ENCODE measurements at regions of chr9 and their contacts with region 1.

Region 1: GRCh38 chr9:122810306-122810946 is 10.5 kb downstream of the OR1K1 start:
- DNase-seq: peak; percentile 81
- ATAC-seq: peak; percentile 94
- H3K4me3 Mint-ChIP-seq: no peak overlapping the region
- H3K27ac Mint-ChIP-seq: no peak overlapping the region
- H3K4me1 Mint-ChIP-seq: no peaks in the 10 kb centered on the region
- H3K27me3 Mint-ChIP-seq: peaks cover 11% of the 10 kb centered on the region
- CTCF ChIP-seq: peak; percentile 75

Region 2: GRCh38 chr9:122464633-122465567 is 345.5 kb before region 1 on chr9:
- CTCF ChIA-PET with region 1: interaction called, 19 read pairs
- POLR2A ChIA-PET with region 1: no interaction called
- DNase-seq: peak; percentile 55
- ATAC-seq: peak; percentile 66
- H3K4me3 Mint-ChIP-seq: no peak overlapping the region
- H3K27ac Mint-ChIP-seq: no peak overlapping the region
- H3K4me1 Mint-ChIP-seq: peaks cover 2% of the 10 kb centered on the region; the same call in 1 of the 2 replicates
- H3K27me3 Mint-ChIP-seq: peaks cover 57% of the 10 kb centered on the region
- CTCF ChIP-seq: peak; percentile 53; the same call in 1 of the 2 replicates

Region 3: GRCh38 chr9:122498883-122499288 is 311.5 kb before region 1 on chr9:
- CTCF ChIA-PET with region 1: interaction called, 19 read pairs
- POLR2A ChIA-PET with region 1: no interaction called
- DNase-seq: peak; percentile 27
- ATAC-seq: peak; percentile 94
- H3K4me3 Mint-ChIP-seq: no peak overlapping the region
- H3K27ac Mint-ChIP-seq: no peak overlapping the region
- H3K4me1 Mint-ChIP-seq: 0 out of 2 replicates have a peak, but pooled peaks cover 2% of the 10 kb centered on the region
- H3K27me3 Mint-ChIP-seq: peaks cover 49% of the 10 kb centered on the region
- CTCF ChIP-seq: peak; percentile 60

Region 4: GRCh38 chr9:122822056-122822455 is 11.6 kb after region 1 on chr9:
- CTCF ChIA-PET with region 1: no interaction called
- POLR2A ChIA-PET with region 1: no interaction called
- DNase-seq: no peak
- ATAC-seq: no peak
- H3K4me3 Mint-ChIP-seq: no peak overlapping the region
- H3K27ac Mint-ChIP-seq: no peak overlapping the region
- H3K4me1 Mint-ChIP-seq: peaks cover 6% of the 10 kb centered on the region
- H3K27me3 Mint-ChIP-seq: no peaks in the 10 kb centered on the region
- CTCF ChIP-seq: no peak

Region 5: DNA sequence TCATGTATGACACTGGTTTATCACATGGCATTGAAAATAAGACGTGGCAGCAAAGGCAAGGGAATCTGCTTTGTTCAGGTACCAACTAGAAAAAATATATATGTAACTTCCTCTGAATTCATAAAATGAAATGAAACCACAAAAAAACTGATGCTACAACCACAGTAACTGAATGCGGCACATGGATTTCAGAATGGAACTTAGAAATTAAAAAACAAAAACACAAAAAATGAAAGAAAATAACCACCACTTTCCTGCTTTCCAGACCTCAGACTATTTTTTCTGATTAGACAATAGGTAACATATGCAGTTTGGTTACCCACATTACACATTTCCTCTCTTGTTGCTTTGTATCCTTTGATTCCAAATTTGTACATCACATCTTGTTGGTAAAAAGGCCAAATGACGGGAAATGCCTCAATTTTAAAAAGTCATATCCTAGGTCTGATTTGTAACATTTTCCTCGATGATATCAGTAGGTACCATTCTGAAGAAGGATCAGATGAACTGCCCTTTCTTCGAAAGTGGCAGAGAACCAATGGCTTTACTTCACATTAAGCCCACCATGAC is 36.0 kb after region 1 on chr9:
- CTCF ChIA-PET with region 1: no interaction called
- POLR2A ChIA-PET with region 1: no interaction called
- DNase-seq: no peak
- ATAC-seq: no peak
- H3K4me3 Mint-ChIP-seq: no peak overlapping the region
- H3K27ac Mint-ChIP-seq: no peak overlapping the region
- H3K4me1 Mint-ChIP-seq: no peaks in the 10 kb centered on the region
- H3K27me3 Mint-ChIP-seq: no peaks in the 10 kb centered on the region
- CTCF ChIP-seq: no peak

Region 6: GRCh38 chr9:123217148-123217585 is 406.7 kb after region 1 on chr9:
- CTCF ChIA-PET with region 1: no interaction called
- POLR2A ChIA-PET with region 1: no interaction called
- DNase-seq: no peak
- ATAC-seq: no peak
- H3K4me3 Mint-ChIP-seq: no peak overlapping the region
- H3K27ac Mint-ChIP-seq: peak overlapping the region; percentile 26; the same call in 1 of the 2 replicates
- H3K4me1 Mint-ChIP-seq: peaks cover 43% of the 10 kb centered on the region
- H3K27me3 Mint-ChIP-seq: no peaks in the 10 kb centered on the region
- CTCF ChIP-seq: no peak